PC-3 (cell line): ENCODE measurements at regions of chr12 and their contacts with region 1.

Region 1: DNA sequence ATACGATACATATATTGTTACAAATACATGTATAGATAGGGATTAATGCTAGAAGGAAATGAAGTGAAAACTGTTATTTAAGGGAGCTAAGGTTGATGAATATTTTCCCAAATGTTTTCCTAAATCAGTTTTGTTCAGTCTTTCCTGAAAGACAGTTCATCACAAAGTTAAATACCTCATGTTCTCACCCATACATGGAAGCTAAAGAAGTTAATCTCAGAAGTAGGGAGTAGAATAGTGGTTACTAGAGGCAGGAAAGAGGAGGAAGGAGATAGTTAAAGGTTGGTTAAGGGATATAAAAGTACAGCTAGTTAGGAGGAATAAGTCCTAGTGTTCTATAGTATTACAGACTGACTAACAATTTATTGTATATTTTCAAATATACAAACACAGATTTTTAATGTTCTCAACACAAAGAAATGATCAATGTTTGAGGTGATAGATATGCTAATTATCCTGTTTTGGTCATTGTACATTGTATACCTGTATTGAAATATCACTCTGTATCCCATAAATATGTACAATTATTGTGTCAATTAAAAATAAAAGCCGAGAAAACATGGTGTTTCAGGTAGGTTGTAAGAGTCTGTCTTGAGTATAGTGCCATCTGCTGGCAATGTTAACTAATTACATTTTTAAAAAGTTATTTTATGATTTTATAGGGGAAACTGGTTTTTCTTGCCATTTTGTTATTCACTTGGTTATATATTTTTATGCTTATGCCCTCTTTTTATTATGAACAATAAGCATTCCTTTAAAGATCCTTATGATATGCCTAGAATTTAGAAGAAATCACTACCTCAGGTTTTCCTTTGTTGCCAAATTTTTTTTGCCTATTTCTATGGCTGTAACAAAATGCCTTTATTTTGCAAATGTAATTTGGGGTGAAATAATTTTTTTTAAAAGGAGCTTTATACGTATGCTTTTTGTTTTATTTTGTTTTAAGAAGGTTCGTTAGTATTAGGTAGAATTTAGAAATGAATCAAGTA is 26.9 kb downstream of the ZDHHC17 start:
- DNase-seq: peak; percentile 57
- ATAC-seq: peak; percentile 65
- H3K4me3 ChIP-seq: no peak overlapping the region
- H3K27ac ChIP-seq: no peak overlapping the region
- H3K4me1 ChIP-seq: peaks cover 5% of the 10 kb centered on the region; the same call in 1 of the 2 replicates
- H3K27me3 ChIP-seq: no peaks in the 10 kb centered on the region
- CTCF ChIP-seq: peak; percentile 74

Region 2: DNA sequence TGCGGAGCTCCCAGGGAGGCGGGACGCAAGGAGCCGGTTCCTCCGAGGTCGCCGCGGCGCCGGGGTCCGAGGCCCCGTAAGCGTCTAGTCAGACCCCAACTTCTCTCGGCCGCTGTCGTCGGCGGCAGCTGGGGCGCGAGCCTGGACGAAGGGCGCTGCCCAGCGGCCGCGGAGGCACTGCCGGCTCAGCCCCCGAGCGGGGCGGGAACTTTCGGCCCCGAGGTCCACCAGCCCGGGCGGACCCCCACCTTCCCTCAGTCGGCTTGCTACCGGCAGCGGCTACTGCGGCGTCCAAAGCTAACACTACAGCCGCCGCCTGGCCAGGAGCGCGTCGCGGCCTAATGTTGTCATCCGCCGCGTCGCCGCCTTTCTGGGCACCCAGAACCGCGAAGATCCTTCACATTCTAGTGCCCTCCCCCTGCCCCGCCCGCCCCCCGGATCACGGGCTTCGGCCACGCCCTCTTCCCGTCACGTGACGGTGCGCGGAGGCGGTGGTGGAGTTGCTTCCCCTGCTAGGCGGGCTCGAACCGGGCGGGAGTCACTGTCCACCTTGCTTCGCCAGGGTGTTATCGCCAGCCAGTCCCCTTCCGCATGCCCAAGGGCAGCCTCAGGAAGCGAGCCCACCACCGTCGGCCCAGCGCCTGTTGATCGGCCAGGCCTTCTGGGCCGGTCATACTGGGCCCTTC is 231.3 kb before region 1 on chr12 and contains the start of gene OSBPL8:
- CTCF ChIA-PET with region 1: no interaction called
- POLR2A ChIA-PET with region 1: no interaction called
- intact Hi-C with region 1: no loop called
- DNase-seq: peak; percentile 93
- ATAC-seq: peak; percentile 76
- H3K4me3 ChIP-seq: peak within 1 kb of the TSS; percentile 100
- H3K27ac ChIP-seq: peak within 1 kb of the TSS; percentile 29
- H3K4me1 ChIP-seq: peaks cover 42% of the 10 kb centered on the region
- H3K27me3 ChIP-seq: no peaks in the 10 kb centered on the region
- CTCF ChIP-seq: no peak; the same call in 1 of the 2 replicates
- total RNA-seq, gene OSBPL8: 28.5 and 42.6 TPM in 2 replicates

Region 3: GRCh38 chr12:76685246-76685678 is 105.6 kb before region 1 on chr12:
- CTCF ChIA-PET with region 1: no interaction called
- POLR2A ChIA-PET with region 1: no interaction called
- intact Hi-C with region 1: loop called (anchors 5 kb)
- DNase-seq: no peak
- ATAC-seq: no peak; the same call in 1 of the 2 replicates
- H3K4me3 ChIP-seq: no peak overlapping the region
- H3K27ac ChIP-seq: no peak overlapping the region
- H3K4me1 ChIP-seq: peaks cover 11% of the 10 kb centered on the region
- H3K27me3 ChIP-seq: no peaks in the 10 kb centered on the region
- CTCF ChIP-seq: no peak